GM13977 (cell line): ENCODE measurements at regions of chr5 and their contacts with region 1.

Region 1: GRCh38 chr5:72816311-72817145 is at the start of gene TNPO1:
- DNase-seq: peak; percentile 92
- CTCF ChIP-seq: no peak

Region 2: DNA sequence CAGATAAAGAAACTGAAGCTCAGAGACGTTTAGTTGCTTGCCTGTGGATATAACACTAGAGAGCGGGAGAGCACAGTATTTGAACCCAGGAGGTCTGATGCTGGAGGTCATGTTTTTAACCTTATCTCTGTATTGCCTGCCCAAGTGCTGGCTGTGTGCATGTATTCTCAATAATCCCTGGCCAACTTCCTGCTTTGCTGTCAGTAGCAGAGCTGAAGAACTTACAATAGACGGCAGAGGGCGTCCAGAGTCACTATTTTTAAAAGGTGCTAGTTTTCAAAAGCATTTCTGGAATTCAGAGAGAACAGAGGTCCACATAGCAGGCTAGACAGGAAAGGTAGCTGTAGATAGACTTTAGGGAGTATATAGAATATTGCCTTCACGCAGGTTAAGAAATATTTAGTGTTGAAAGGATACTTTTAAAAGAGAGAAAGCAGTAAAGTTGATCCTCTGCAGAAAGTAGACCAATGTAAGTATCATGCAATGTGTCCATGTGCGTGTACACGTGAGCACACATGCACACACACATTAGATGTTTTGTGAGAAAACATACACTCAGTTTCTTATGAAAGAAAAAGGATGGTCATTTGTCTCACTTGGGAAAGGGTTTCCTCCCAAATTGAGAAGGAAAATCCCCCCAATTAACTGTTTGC is 450.1 kb before region 1 on chr5:
- in situ Hi-C with region 1: loop called (anchors 25 kb)
- DNase-seq: peak; percentile 32
- CTCF ChIP-seq: peak; percentile 77

Region 3: DNA sequence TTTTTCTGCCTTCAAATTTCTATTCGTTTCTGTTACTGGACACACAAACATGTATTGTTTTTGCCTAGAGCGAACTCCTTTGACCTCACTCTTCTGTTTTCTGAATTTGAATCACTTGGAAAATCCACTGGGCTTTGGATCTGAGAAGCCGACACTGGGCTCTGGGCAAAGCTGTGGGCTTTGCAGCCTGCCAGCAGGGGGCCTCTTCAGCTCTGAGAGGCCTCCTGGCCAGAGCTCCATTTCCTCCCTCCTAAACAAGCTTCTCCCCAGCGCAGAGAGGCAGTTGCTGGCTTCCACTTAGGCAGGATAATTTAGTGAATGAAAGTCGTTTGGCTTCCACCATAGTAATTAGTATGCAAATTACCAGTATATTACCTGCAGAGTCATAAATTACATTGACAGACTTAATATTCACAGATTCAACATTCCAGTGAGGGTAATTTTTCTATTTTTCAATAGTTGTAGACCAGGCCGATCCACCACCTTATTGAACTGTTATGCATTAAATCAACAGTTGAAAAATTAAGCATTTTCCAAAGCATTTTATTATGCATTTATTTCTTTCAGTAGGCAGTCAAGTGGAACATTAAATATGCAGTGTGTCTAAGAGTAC is 205.3 kb before region 1 on chr5:
- in situ Hi-C with region 1: loop called (anchors 25 kb)
- DNase-seq: peak; percentile 57
- CTCF ChIP-seq: peak; percentile 89